B cell (primary cell): ENCODE measurements at regions of chr13 and their contacts with region 1.

Region 1: GRCh38 chr13:113816946-113817859 is 46.7 kb downstream of the GAS6 start:
- DNase-seq: peak; percentile 78
- ATAC-seq: peak; percentile 83
- H3K4me3 ChIP-seq: peak overlapping the region in 2 of 5 experiments; percentile 67 to 76
- H3K4me3 Mint-ChIP-seq: peak overlapping the region; percentile 99
- H3K27ac ChIP-seq: no peak overlapping the region
- H3K27ac Mint-ChIP-seq: peak overlapping the region; percentile 84
- H3K4me1 ChIP-seq: peaks cover 11 to 18% of the 10 kb centered on the region in 2 donors
- H3K4me1 Mint-ChIP-seq: peaks cover 23% of the 10 kb centered on the region
- H3K27me3 ChIP-seq: no peaks in the 10 kb centered on the region
- H3K27me3 Mint-ChIP-seq: no peaks in the 10 kb centered on the region
- CTCF ChIP-seq: peak; percentile 74

Region 2: DNA sequence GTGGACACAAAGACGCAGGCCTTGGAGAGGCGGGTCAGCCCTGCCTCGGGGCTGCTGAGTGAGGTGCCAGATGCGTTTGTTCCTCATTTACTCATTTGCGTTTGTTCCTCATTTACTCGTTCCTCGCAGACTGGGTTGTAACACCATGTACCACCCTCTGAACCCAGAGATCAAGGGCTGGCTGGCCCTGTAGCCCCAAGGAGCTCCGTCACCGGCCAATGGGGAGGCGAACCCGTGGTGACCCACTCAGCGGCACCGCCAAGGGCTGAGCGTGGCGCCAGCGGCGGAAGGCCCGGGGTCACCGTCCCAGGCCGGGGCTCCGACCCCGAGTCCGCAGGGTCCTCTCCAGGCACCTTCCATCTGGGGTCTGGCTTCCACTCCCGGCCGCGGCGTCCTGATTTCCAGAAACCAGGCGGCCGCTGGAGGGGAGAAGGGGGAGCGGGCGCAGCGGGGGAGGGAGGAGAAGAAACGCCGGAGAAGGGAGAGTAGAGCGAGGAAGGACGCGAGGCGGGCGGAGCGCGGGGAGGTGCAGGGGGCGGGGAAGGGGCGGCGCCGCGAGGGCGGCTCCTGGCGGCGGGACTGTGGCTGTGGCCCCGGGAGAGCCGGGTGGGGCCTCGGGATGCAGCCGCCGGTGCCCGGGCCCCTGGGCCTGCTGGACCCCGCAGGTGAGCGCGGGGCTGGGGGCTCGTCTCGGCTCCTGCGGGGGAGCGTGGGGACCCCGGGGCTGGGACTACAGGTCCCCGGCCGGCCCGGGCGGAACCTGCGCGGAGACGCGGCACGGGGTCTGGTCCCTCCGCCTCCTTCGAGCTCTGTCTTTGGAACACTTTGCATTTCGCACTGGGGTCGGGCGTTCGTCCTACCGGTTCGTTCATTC is 58.3 kb before region 1 on chr13 and contains the start of gene TMEM255B:
- CTCF ChIA-PET with region 1: no interaction called
- POLR2A ChIA-PET with region 1: interaction called, 3 read pairs
- intact Hi-C with region 1: loop called (anchors 2 kb)
- DNase-seq: peak; percentile 84
- ATAC-seq: peak; percentile 85
- H3K4me3 ChIP-seq: peak within 1 kb of the TSS; percentile 72 to 90 (median 76)
- H3K4me3 Mint-ChIP-seq: peak within 1 kb of the TSS; percentile 88
- H3K27ac ChIP-seq: peak within 1 kb of the TSS; percentile 74 to 87
- H3K27ac Mint-ChIP-seq: peak within 1 kb of the TSS; percentile 75
- H3K4me1 ChIP-seq: peaks cover 13 to 16% of the 10 kb centered on the region in 2 donors
- H3K4me1 Mint-ChIP-seq: peaks cover 20% of the 10 kb centered on the region
- H3K27me3 ChIP-seq: peaks cover 0 to 30% (median 18%) of the 10 kb centered on the region in 4 experiments
- H3K27me3 Mint-ChIP-seq: peaks cover 36% of the 10 kb centered on the region
- CTCF ChIP-seq: peak; percentile 56
- total RNA-seq, gene TMEM255B: 5.9 and 8.2 TPM in 2 replicates

Region 3: GRCh38 chr13:114132419-114133121 is 315.4 kb after region 1 on chr13 and contains the start of gene RASA3:
- CTCF ChIA-PET with region 1: no interaction called
- POLR2A ChIA-PET with region 1: no interaction called
- intact Hi-C with region 1: loop called (anchors 5 kb)
- DNase-seq: peak; percentile 74
- ATAC-seq: peak; percentile 69
- H3K4me3 ChIP-seq: peak within 1 kb of the TSS; percentile 82 to 95 (median 86)
- H3K4me3 Mint-ChIP-seq: peak within 1 kb of the TSS; percentile 100
- H3K27ac ChIP-seq: peak within 1 kb of the TSS; percentile 39 to 90
- H3K27ac Mint-ChIP-seq: peak within 1 kb of the TSS; percentile 87
- H3K4me1 ChIP-seq: peaks cover 44 to 49% of the 10 kb centered on the region in 2 donors
- H3K4me1 Mint-ChIP-seq: peaks cover 58% of the 10 kb centered on the region
- H3K27me3 ChIP-seq: no peaks in the 10 kb centered on the region
- H3K27me3 Mint-ChIP-seq: no peaks in the 10 kb centered on the region
- CTCF ChIP-seq: no peak
- total RNA-seq, gene RASA3: 87.4 and 88.8 TPM in 2 replicates